ENCODE measurements at regions of chr17 and their contacts with region 1.

Region 1: GRCh38 chr17:32519228-32520103 is 32.7 kb downstream of the CDK5R1 start:
- DNase-seq: peak; percentile 23 to 73 (median 46)
- ATAC-seq: peak; percentile 64
- H3K4me3 ChIP-seq: peak overlapping the region; percentile 50
- H3K4me3 Mint-ChIP-seq: peak overlapping the region; percentile 76 to 96 (median 88)
- H3K27ac ChIP-seq: peak overlapping the region; percentile 60
- H3K27ac Mint-ChIP-seq: peak overlapping the region; percentile 88 to 99 (median 93)
- H3K4me1 ChIP-seq: peaks cover 53 to 66% of the 10 kb centered on the region in 2 donors
- H3K4me1 Mint-ChIP-seq: peaks cover 40 to 83% (median 78%) of the 10 kb centered on the region in 7 donors
- H3K27me3 ChIP-seq: no peaks in the 10 kb centered on the region
- H3K27me3 Mint-ChIP-seq: no peaks in the 10 kb centered on the region

Region 2: DNA sequence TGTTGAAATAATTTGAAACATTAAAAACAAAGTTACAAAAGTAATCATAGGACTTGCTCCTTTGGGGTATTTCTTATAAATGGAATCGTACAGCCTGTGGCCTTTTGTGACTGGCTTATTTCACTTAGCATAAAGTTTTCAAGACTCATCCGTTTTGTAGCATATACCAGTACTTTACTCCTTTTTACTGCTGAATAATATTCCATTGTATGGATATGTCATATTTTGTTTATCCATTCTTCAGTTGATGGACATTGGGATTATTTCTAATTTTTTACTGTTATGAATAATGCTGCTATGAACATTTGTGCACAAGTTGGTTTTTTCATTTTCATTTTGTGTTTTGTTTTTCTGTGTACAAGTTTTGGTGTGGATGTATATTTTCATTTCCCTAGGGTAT is 283.9 kb before region 1 on chr17:
- CTCF ChIA-PET with region 1: no interaction called
- POLR2A ChIA-PET with region 1: no interaction called
- intact Hi-C with region 1: no loop called
- DNase-seq: no peak
- ATAC-seq: no peak
- H3K4me3 ChIP-seq: no peak overlapping the region
- H3K4me3 Mint-ChIP-seq: no peak overlapping the region
- H3K27ac ChIP-seq: no peak overlapping the region
- H3K27ac Mint-ChIP-seq: no peak overlapping the region
- H3K4me1 ChIP-seq: peaks cover 0 to 6% of the 10 kb centered on the region in 2 donors
- H3K4me1 Mint-ChIP-seq: peaks cover 0 to 15% (median 12%) of the 10 kb centered on the region in 7 donors
- H3K27me3 ChIP-seq: no peaks in the 10 kb centered on the region
- H3K27me3 Mint-ChIP-seq: no peaks in the 10 kb centered on the region

Region 3: DNA sequence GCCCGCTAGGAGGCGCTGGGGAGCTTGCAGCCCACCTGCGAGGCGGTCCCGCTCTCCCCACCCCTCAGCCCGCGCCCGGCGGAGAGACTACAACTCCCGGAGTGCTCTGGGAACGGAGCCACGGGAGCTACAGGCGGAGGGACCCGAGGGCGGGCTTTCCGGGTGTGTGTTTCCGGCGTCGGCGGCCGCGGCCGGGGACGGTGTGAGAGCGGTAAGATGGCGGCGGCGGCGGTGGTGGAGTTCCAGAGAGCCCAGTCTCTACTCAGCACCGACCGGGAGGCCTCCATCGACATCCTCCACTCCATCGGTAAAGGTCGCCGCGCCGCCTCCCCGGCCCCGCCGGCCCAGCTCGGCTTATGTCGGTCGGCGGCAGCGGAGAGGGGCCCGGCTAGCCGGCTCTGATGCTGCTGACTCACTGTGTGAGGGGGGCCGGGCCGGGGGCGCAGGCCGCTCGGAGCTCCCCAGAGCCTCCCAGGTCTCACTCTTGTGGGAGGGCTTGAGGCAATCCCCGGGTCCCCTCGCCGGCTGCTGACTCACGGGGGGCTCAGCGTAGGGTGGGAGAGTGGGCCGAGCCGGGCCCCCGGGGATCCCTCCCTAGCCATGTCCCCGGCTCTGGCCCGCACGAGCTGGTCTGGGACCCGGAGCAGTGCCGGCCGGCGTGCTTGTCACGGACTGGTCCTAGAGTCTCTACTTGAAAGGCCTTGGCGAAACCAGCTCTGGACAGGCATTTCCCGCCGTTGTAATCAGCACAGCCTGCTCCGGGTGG is 75.0 kb before region 1 on chr17 and contains the start of gene PSMD11:
- CTCF ChIA-PET with region 1: no interaction called
- POLR2A ChIA-PET with region 1: interaction called, 4 read pairs
- intact Hi-C with region 1: loop called in 1 of 2 experiments (anchors 1 kb)
- DNase-seq: peak; percentile 98 to 100 (median 99)
- ATAC-seq: peak; percentile 99
- H3K4me3 ChIP-seq: peak within 1 kb of the TSS; percentile 80
- H3K4me3 Mint-ChIP-seq: peak within 1 kb of the TSS; percentile 78 to 93 (median 86)
- H3K27ac ChIP-seq: peak within 1 kb of the TSS; percentile 94
- H3K27ac Mint-ChIP-seq: peak within 1 kb of the TSS; percentile 52 to 83 (median 78)
- H3K4me1 ChIP-seq: peaks cover 13 to 14% of the 10 kb centered on the region in 2 donors
- H3K4me1 Mint-ChIP-seq: peaks cover 25 to 46% (median 36%) of the 10 kb centered on the region in 7 donors
- H3K27me3 ChIP-seq: no peaks in the 10 kb centered on the region
- H3K27me3 Mint-ChIP-seq: peaks cover 0 to 23% (median 0%) of the 10 kb centered on the region in 5 donors
- total RNA-seq, gene PSMD11: 60.1 to 112 (median 67.5) TPM

Region 4: DNA sequence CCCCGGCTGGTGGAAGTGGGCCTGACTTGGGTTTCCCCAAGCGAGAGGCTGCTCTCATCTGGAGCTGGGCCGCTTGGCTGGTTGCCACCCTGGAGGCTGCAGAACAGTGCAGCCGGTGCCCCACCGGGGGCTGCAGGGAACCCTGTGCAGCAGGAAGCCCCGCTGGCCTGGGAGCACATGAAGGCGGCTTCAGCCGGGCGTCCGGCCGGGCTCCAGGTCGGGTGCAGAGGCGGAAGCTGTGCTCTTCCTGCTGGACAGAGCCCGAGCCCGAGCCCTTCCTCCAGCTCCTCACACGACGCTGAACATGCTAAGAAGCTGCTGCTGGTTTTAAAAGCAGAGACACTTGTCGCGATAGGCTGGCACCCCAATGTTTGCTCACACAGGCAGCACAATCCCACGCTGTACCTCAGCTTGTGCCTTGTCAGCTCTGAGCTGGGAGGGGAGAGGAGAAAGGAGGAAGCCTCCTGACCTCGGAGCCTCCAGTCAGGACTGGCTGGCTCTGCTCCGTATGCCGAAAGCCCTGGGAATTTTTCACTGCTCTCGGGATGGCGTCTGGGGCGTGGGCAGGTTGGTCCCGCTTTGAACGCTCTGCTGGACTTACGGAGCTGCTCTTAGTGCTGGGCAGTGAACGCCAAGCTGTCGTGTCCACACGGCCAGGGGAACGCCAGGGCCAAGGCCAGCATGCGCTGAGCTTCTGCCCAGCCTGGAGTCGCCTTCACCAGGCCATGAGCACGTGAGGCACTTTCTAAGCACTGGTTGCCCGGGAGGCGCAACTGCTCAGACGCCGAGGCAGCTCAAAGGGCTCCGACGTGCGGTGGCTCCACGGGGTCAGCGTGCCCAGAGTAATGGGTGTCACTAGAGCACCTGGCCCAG is 23.9 kb before region 1 on chr17:
- CTCF ChIA-PET with region 1: interaction called, 16 read pairs
- POLR2A ChIA-PET with region 1: interaction called, 382 read pairs
- intact Hi-C with region 1: no loop called
- DNase-seq: no peak
- ATAC-seq: peak; percentile 36
- H3K4me3 ChIP-seq: no peak overlapping the region
- H3K4me3 Mint-ChIP-seq: peak overlapping the region in 2 of 10 donors; percentile 23 to 59
- H3K27ac ChIP-seq: no peak overlapping the region
- H3K27ac Mint-ChIP-seq: peak overlapping the region in 3 of 9 donors; percentile 24 to 78 (median 70)
- H3K4me1 ChIP-seq: peaks cover 19 to 54% of the 10 kb centered on the region in 2 donors
- H3K4me1 Mint-ChIP-seq: peaks cover 23 to 82% (median 49%) of the 10 kb centered on the region in 7 donors
- H3K27me3 ChIP-seq: no peaks in the 10 kb centered on the region
- H3K27me3 Mint-ChIP-seq: no peaks in the 10 kb centered on the region

Region 5: GRCh38 chr17:32551186-32551955 is 31.9 kb after region 1 on chr17:
- CTCF ChIA-PET with region 1: interaction called, 3 read pairs
- POLR2A ChIA-PET with region 1: interaction called, 3 read pairs
- intact Hi-C with region 1: loop called (anchors 5 kb)
- DNase-seq: no peak
- ATAC-seq: peak; percentile 37
- H3K4me3 ChIP-seq: no peak overlapping the region
- H3K4me3 Mint-ChIP-seq: peak overlapping the region in 1 of 10 donors; percentile 76
- H3K27ac ChIP-seq: no peak overlapping the region
- H3K27ac Mint-ChIP-seq: peak overlapping the region in 2 of 9 donors; percentile 48 to 57
- H3K4me1 ChIP-seq: peaks cover 11 to 12% of the 10 kb centered on the region in 2 donors
- H3K4me1 Mint-ChIP-seq: peaks cover 18 to 52% (median 41%) of the 10 kb centered on the region in 7 donors
- H3K27me3 ChIP-seq: no peaks in the 10 kb centered on the region
- H3K27me3 Mint-ChIP-seq: no peaks in the 10 kb centered on the region

Region 6: DNA sequence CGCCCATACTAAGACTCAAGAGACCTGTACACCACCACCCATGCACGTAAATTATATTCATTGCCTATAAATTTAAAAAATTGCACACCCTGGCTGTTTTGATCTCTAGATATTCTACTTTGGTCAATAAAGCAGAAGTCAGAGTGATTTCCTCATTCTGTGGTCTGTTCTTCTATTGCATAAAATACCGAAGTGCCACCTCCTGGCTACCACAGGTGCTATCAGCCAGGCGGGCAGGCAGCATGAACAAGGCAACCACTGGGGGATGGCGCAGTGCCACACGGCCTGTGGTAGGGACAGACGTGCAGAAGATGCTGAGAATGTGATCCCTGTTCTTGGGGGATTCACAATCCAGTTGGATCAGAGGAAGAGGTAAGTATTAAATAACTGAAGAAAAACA is 89.6 kb after region 1 on chr17:
- CTCF ChIA-PET with region 1: interaction called, 4 read pairs
- POLR2A ChIA-PET with region 1: interaction called, 4 read pairs
- intact Hi-C with region 1: loop called in 1 of 2 experiments (anchors 1 kb)
- DNase-seq: peak; percentile 48 to 81 (median 72)
- ATAC-seq: peak; percentile 100
- H3K4me3 ChIP-seq: no peak overlapping the region
- H3K4me3 Mint-ChIP-seq: no peak overlapping the region
- H3K27ac ChIP-seq: no peak overlapping the region
- H3K27ac Mint-ChIP-seq: peak overlapping the region in 2 of 9 donors; percentile 0 to 14
- H3K4me1 ChIP-seq: no peaks in the 10 kb centered on the region
- H3K4me1 Mint-ChIP-seq: peaks cover 6 to 9% (median 8%) of the 10 kb centered on the region in 7 donors
- H3K27me3 ChIP-seq: no peaks in the 10 kb centered on the region
- H3K27me3 Mint-ChIP-seq: peaks cover 0 to 6% (median 0%) of the 10 kb centered on the region in 5 donors

Measured in naive thymus-derived CD4-positive, alpha-beta T cell (primary cell).